ENCODE measurements at regions of chr9 and their contacts with region 1.

Region 1: DNA sequence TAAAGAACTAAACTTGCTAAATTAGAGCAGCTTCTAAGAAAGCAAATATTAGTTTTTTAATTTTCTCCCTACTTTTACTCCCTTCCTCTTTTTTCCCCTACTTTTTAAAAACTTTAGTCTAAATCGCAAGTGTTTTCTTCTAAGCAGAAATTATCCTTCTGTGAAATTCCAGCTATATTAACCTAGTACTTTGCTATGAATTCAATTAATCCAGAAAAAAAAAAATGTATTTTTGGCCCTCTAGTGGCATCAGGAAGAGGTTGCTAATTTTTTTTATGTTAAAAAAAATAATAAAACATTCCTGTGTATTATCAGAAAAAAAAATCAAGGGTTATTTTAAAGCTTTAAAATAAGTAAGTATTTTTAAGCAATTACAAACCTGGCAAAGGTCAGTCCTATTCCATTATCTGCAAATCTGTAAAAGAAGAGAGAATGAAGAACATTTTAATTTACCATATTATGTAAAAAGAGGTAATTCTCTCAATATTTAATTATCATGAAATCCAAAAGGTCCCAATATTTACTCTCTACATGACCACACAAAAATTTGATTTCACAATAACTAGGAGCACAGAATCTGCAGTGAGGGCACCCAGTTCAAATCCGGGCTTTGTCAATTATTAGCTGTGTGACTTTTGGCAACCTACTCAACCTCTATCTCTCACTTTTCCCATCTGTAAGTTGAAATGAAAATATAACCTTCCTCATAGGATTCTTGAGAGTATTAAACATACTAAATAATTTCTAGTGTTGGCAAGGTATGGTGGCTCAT is 52.0 kb downstream of the CEMIP2 start:
- DNase-seq: no peak
- ATAC-seq: no peak
- H3K4me3 ChIP-seq: no peak overlapping the region
- H3K27ac ChIP-seq: no peak overlapping the region
- H3K4me1 ChIP-seq: no peaks in the 10 kb centered on the region
- H3K27me3 ChIP-seq: no peaks in the 10 kb centered on the region
- CTCF ChIP-seq: peak in 1 of 3 experiments; percentile 40; a peak in 3 of 6 replicates
- EP300 ChIP-seq: no peak
- POLR2A ChIP-seq: no peak
- RAD21 ChIP-seq: peak; percentile 14 to 19; a peak in 2 of 4 replicates

Region 2: DNA sequence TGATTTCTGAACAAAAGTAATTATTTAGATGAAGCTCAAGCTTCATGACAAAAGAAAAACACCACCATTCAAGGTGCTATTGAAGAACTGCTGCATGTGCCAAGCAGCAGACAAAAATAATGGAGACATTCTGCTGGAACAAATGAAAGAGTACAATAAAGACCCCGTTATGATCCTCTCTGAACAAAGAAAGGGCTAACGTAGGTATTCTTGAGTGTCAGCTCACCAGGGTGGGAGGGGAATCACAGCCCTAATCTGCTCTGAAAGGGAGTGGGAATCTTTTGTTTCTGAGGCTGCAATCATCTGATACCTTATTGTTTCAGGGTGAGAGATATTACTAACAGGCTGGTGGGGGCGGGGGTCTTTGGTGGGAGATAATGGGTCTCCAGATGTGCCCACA is 36.6 kb after region 1 on chr9:
- CTCF ChIA-PET with region 1: no interaction called
- POLR2A ChIA-PET with region 1: no interaction called
- in situ Hi-C with region 1: no loop called
- intact Hi-C with region 1: no loop called
- DNase-seq: no peak
- ATAC-seq: no peak
- H3K4me3 ChIP-seq: no peak overlapping the region
- H3K27ac ChIP-seq: no peak overlapping the region
- H3K4me1 ChIP-seq: no peaks in the 10 kb centered on the region; a peak in 3 of 5 replicates
- H3K27me3 ChIP-seq: no peaks in the 10 kb centered on the region
- CTCF ChIP-seq: no peak
- EP300 ChIP-seq: no peak
- POLR2A ChIP-seq: no peak
- RAD21 ChIP-seq: no peak

Region 3: DNA sequence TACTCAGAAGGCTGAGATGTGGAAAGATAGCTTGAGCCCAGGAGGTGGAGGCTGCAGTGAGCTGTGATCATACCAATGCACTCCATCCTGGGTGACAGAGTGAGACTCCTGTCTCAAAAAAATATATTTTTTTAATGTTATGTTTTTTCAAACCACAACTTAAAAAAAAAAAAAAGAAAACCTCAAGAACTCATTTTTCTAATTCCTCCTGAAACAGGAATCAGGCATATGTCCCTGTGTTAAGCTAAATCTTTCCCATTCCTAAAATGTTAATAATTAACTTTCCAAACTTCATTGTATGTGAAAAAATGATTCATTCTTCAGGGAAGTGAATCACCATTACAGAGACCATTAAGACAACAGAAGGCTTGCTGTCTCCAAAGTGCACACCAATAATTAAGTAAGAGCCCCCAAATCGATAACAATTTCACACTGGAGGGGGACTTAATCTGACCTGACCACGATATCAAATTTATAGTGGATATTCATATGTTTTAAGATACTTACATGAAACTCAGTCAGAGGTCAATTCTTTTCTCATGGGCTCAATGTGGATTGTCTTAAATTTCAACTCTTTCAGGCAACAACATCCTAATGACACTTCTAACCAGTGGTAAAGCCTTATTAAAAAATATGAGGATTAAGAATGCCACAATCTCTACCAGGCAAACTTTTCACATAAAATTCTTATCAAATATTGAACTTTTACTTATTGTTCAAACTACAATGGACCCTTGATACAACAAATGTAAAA is 46.8 kb after region 1 on chr9:
- CTCF ChIA-PET with region 1: no interaction called
- POLR2A ChIA-PET with region 1: no interaction called
- in situ Hi-C with region 1: no loop called
- intact Hi-C with region 1: loop called (anchors 5 kb)
- DNase-seq: no peak
- ATAC-seq: no peak
- H3K4me3 ChIP-seq: no peak overlapping the region
- H3K27ac ChIP-seq: no peak overlapping the region
- H3K4me1 ChIP-seq: peaks cover 0 to 29% of the 10 kb centered on the region in 2 experiments; a peak in 4 of 5 replicates
- H3K27me3 ChIP-seq: no peaks in the 10 kb centered on the region
- CTCF ChIP-seq: no peak
- EP300 ChIP-seq: no peak
- POLR2A ChIP-seq: no peak
- RAD21 ChIP-seq: no peak